Esophagus squamous epithelium (tissue), 5 donors: ENCODE measurements at regions of chr2 and their contacts with region 1.

Region 1: DNA sequence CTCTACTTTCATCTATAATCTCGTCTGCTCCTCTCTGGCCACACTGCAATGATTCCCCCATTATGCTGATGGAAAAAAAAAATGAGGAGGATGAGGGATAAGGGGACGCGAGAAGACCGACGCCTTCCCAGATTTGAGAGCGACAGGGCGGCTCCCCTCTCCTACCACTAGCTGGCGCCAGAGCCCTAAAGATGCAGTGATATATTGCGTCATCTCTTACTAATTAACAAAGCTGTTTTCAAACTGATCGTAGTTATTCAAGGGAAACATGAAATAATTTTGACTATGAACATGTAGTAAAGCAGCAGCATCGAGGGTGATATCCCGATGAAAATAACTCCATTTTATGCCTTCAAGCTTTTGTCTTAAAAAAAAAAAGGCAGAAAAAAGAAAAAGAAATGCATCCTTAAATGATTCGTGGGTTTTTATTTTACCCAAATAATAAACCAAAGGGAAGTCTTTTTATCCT is 48.0 kb upstream of the HNRNPA3 start:
- DNase-seq: peak; percentile 28
- H3K4me3 ChIP-seq: peak overlapping the region; percentile 5 to 60 (median 40)
- H3K27ac ChIP-seq: peak overlapping the region; percentile 76 to 91 (median 88)
- H3K4me1 ChIP-seq: peaks cover 0 to 64% (median 28%) of the 10 kb centered on the region in 3 donors
- H3K27me3 ChIP-seq: no peaks in the 10 kb centered on the region
- CTCF ChIP-seq: peak; percentile 97 to 100 (median 99)
- POLR2A ChIP-seq: no peak

Region 2: DNA sequence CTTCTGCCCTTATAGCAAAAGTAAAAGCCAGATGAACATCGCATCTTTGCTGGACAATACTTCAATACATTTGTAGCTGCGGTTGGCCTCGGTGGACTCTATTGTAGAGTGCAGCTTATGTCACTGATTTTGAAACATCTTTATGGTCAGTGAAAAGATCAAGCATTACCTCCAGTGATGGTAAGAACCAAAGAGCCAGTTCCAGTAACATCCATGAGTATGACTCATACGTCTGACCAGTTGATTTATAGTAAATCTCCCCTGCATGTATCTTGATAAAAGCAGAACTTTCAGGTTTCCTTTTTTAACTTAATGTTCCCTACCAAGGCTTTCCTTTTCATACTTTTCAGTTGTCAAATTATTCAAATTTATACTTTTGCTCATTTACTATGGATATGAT is 71.2 kb before region 1 on chr2:
- intact Hi-C with region 1: no loop called
- DNase-seq: no peak
- H3K4me3 ChIP-seq: no peak overlapping the region
- H3K27ac ChIP-seq: no peak overlapping the region
- H3K4me1 ChIP-seq: no peaks in the 10 kb centered on the region
- H3K27me3 ChIP-seq: no peaks in the 10 kb centered on the region
- CTCF ChIP-seq: no peak
- POLR2A ChIP-seq: no peak

Region 3: GRCh38 chr2:177263451-177264208 is 99.0 kb after region 1 on chr2:
- intact Hi-C with region 1: loop called (anchors 10 kb)
- DNase-seq: peak; percentile 85
- H3K4me3 ChIP-seq: peak overlapping the region; percentile 71 to 99 (median 80)
- H3K27ac ChIP-seq: peak overlapping the region; percentile 98 to 100 (median 99)
- H3K4me1 ChIP-seq: peaks cover 27 to 68% (median 38%) of the 10 kb centered on the region in 3 donors
- H3K27me3 ChIP-seq: no peaks in the 10 kb centered on the region
- CTCF ChIP-seq: peak; percentile 74 to 95 (median 90)
- POLR2A ChIP-seq: peak in 3 of 4 donors; percentile 54 to 80 (median 59)

Region 4: GRCh38 chr2:177332041-177332991 is 167.7 kb after region 1 on chr2:
- intact Hi-C with region 1: loop called (anchors 5 kb)
- DNase-seq: no peak
- H3K4me3 ChIP-seq: peak overlapping the region in 2 of 4 donors; percentile 6 to 25
- H3K27ac ChIP-seq: peak overlapping the region in 3 of 4 donors; percentile 30 to 67 (median 30)
- H3K4me1 ChIP-seq: peaks cover 0 to 33% (median 3%) of the 10 kb centered on the region in 3 donors
- H3K27me3 ChIP-seq: no peaks in the 10 kb centered on the region
- CTCF ChIP-seq: peak in 5 of 6 experiments; percentile 58 to 78 (median 70)
- POLR2A ChIP-seq: no peak

Region 5: GRCh38 chr2:177419274-177419673 is 254.7 kb after region 1 on chr2:
- intact Hi-C with region 1: loop called (anchors 10 kb)
- DNase-seq: no peak
- H3K4me3 ChIP-seq: no peak overlapping the region
- H3K27ac ChIP-seq: no peak overlapping the region
- H3K4me1 ChIP-seq: peaks cover 0 to 26% (median 10%) of the 10 kb centered on the region in 3 donors
- H3K27me3 ChIP-seq: no peaks in the 10 kb centered on the region
- CTCF ChIP-seq: no peak
- POLR2A ChIP-seq: no peak